ENCODE measurements at regions of chr3 and their contacts with region 1.

Region 1: DNA sequence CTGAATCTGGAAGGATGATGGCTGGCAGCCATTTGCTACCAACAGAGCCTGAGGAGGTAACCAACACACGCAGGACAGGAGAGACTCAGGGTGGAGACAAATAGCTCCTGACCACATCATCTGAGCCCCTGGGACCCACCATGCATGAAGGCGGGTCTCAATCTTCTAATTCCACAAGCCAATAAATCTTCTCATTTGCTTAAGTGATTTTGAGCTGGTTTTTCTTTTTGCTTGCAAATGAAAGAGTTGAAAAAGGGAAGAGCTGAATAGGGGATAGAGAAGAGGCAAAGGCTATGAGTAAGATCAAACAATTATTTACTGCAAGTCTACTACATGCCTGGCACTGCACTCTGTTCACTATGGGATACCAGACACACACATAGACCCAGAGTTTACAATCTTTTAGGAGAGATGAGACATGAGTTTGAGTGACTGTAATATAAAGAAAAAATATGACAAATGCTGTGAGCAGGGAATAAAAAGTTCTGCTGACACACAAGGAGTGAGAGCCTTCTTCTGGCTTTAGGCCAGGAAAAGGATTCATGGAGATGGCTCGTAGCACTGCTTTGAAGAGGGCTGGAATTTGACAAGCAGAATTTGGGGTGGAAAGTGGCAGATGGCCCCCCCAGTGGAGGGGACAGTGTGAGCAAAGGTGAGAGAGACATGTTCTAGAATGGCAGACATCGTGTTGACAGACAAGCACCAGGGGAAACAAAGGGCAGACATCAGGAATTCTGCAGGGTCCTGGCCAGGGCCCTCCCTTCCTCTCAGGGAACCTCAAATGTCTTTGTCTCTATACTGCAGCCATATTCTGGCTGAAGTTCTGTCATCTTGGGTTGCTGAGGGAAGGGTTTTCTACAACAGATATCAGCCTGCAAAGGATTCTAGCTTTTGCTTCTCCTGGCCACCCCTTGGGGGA is 69.8 kb upstream of the WNT5A start:
- DNase-seq: peak; percentile 57
- ATAC-seq: peak; percentile 57
- H3K4me3 ChIP-seq: no peak overlapping the region
- H3K27ac ChIP-seq: no peak overlapping the region
- H3K4me1 ChIP-seq: peaks cover 7% of the 10 kb centered on the region
- H3K27me3 ChIP-seq: no peaks in the 10 kb centered on the region
- CTCF ChIP-seq: no peak
- POLR2A ChIP-seq: no peak
- RAD21 ChIP-seq: no peak

Region 2: GRCh38 chr3:55144015-55144673 is 412.7 kb before region 1 on chr3:
- CTCF ChIA-PET with region 1: no interaction called
- POLR2A ChIA-PET with region 1: no interaction called
- dilution Hi-C with region 1: no loop called
- in situ Hi-C with region 1: no loop called
- intact Hi-C with region 1: no loop called
- DNase-seq: peak; percentile 54
- ATAC-seq: no peak
- H3K4me3 ChIP-seq: no peak overlapping the region
- H3K27ac ChIP-seq: no peak overlapping the region
- H3K4me1 ChIP-seq: peaks cover 8% of the 10 kb centered on the region
- H3K27me3 ChIP-seq: no peaks in the 10 kb centered on the region
- CTCF ChIP-seq: no peak
- POLR2A ChIP-seq: no peak
- RAD21 ChIP-seq: no peak

Region 3: GRCh38 chr3:55491296-55491816 is 65.5 kb before region 1 on chr3:
- CTCF ChIA-PET with region 1: no interaction called
- POLR2A ChIA-PET with region 1: no interaction called
- dilution Hi-C with region 1: no loop called
- in situ Hi-C with region 1: no loop called
- intact Hi-C with region 1: loop called (anchors 5 kb)
- DNase-seq: peak; percentile 92
- ATAC-seq: no peak; the same call in 1 of the 2 replicates
- H3K4me3 ChIP-seq: no peak overlapping the region
- H3K27ac ChIP-seq: peak overlapping the region; percentile 38; the same call in 1 of the 2 replicates
- H3K4me1 ChIP-seq: peaks cover 18% of the 10 kb centered on the region
- H3K27me3 ChIP-seq: no peaks in the 10 kb centered on the region
- CTCF ChIP-seq: no peak
- POLR2A ChIP-seq: no peak
- RAD21 ChIP-seq: no peak